CD8-positive, alpha-beta memory T cell (primary cell): ENCODE measurements at regions of chr10 and their contacts with region 1.

Region 1: DNA sequence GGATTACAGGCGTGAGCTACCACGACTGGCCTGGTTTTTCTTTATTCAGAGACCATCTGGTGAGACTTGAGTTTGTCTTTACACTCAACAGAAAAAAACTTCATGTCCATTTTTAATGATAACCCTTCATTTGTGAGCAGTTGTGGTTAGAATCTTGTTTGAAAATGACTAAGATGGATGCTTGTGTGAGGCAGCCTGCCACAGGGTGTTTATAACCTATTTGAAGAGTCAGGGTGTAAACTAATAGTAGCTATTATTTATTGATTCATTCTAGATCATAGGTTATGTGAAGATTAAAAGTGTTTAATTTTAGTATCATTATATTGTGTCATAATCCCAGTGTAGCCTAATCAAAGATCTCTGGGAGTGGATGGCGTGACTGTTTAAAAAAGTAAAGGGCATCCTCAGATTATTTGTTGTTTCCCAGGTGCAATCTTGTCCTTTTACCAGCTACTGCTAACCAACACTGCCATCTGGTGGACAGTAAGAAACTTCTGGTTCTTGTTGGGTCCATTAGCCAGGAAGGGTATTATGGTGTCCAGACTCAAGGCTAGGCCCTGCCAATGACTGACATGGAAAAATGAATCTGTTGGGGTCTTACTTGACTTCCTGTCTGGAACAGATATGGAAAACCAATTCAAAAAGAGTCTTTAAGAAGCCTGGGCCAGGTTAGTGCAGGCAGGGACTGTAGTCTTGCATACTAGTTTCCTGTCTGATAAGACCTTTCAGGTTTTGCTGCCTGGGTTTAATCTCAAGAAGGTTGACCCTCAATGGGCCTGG is 24.9 kb downstream of the NRBF2 start:
- DNase-seq: peak; percentile 13 to 57 (median 57)
- H3K4me3 ChIP-seq: no peak overlapping the region
- H3K4me3 Mint-ChIP-seq: no peak overlapping the region
- H3K27ac ChIP-seq: no peak overlapping the region
- H3K27ac Mint-ChIP-seq: peak overlapping the region in 1 of 8 donors; percentile 65
- H3K4me1 ChIP-seq: no peaks in the 10 kb centered on the region
- H3K4me1 Mint-ChIP-seq: peaks cover 4 to 18% (median 12%) of the 10 kb centered on the region in 3 donors
- H3K27me3 ChIP-seq: no peaks in the 10 kb centered on the region
- H3K27me3 Mint-ChIP-seq: peaks cover 0 to 1% of the 10 kb centered on the region in 2 donors

Region 2: DNA sequence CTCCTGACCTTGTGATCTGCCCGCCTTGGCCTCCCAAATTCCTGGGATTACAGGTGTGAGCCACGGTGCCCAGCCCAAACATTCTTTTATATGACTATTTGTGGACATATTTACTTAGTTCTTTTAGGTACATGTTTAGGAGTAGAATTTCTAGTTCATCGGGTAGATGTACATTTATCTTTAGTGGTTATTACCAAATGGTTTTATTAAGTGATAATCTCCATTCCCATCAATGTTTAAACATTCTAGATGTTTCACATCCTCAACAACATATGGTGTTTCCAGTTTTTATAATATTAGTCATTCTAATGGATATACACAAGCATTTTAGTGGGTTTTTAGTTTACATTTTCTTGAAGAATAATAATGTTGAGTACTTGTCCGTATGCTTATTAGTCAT is 1021.1 kb before region 1 on chr10:
- CTCF ChIA-PET with region 1: no interaction called
- POLR2A ChIA-PET with region 1: no interaction called
- DNase-seq: no peak
- H3K4me3 ChIP-seq: no peak overlapping the region
- H3K4me3 Mint-ChIP-seq: no peak overlapping the region
- H3K27ac ChIP-seq: no peak overlapping the region
- H3K27ac Mint-ChIP-seq: no peak overlapping the region
- H3K4me1 ChIP-seq: no peaks in the 10 kb centered on the region
- H3K4me1 Mint-ChIP-seq: peaks cover 0 to 4% (median 2%) of the 10 kb centered on the region in 3 donors
- H3K27me3 ChIP-seq: no peaks in the 10 kb centered on the region
- H3K27me3 Mint-ChIP-seq: no peaks in the 10 kb centered on the region

Region 3: GRCh38 chr10:62437696-62438095 is 720.3 kb before region 1 on chr10:
- CTCF ChIA-PET with region 1: interaction called, 19 read pairs
- POLR2A ChIA-PET with region 1: no interaction called
- DNase-seq: peak in 2 of 5 donors; percentile 46 to 58
- H3K4me3 ChIP-seq: no peak overlapping the region
- H3K4me3 Mint-ChIP-seq: no peak overlapping the region
- H3K27ac ChIP-seq: no peak overlapping the region
- H3K27ac Mint-ChIP-seq: no peak overlapping the region
- H3K4me1 ChIP-seq: no peaks in the 10 kb centered on the region
- H3K4me1 Mint-ChIP-seq: peaks cover 0 to 3% (median 2%) of the 10 kb centered on the region in 3 donors
- H3K27me3 ChIP-seq: no peaks in the 10 kb centered on the region
- H3K27me3 Mint-ChIP-seq: peaks cover 1 to 9% of the 10 kb centered on the region in 2 donors

Region 4: DNA sequence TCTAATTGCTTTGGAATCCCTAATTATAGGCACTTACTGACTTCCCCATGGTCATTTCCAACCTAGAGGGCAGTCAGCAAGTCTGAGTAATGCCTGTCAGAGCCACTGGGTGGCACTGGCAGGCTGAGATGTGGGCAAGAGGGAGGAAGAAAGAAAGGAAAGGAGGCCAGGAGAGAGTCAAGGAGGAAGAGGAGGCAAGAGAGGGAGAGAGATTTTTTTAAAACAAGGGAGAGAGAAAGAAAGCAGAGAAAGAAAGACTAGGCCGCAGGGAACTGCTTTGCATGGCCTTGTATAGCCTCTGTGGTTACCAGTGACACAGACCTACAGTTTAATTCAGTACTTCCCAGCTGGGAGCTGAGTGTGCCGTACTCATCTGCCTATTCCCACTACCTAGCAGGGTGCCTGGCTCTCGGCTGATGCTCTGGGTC is 563.9 kb before region 1 on chr10:
- CTCF ChIA-PET with region 1: interaction called, 16 read pairs
- POLR2A ChIA-PET with region 1: no interaction called
- DNase-seq: peak; percentile 28 to 62 (median 34)
- H3K4me3 ChIP-seq: no peak overlapping the region
- H3K4me3 Mint-ChIP-seq: no peak overlapping the region
- H3K27ac ChIP-seq: no peak overlapping the region
- H3K27ac Mint-ChIP-seq: no peak overlapping the region
- H3K4me1 ChIP-seq: no peaks in the 10 kb centered on the region
- H3K4me1 Mint-ChIP-seq: peaks cover 0 to 5% (median 0%) of the 10 kb centered on the region in 3 donors
- H3K27me3 ChIP-seq: no peaks in the 10 kb centered on the region
- H3K27me3 Mint-ChIP-seq: peaks cover 7 to 10% of the 10 kb centered on the region in 2 donors

Region 5: GRCh38 chr10:63145782-63146181 is 12.3 kb before region 1 on chr10:
- CTCF ChIA-PET with region 1: interaction called, 10 read pairs
- POLR2A ChIA-PET with region 1: no interaction called
- DNase-seq: no peak
- H3K4me3 ChIP-seq: no peak overlapping the region
- H3K4me3 Mint-ChIP-seq: no peak overlapping the region
- H3K27ac ChIP-seq: no peak overlapping the region
- H3K27ac Mint-ChIP-seq: peak overlapping the region in 3 of 8 donors; percentile 6 to 52 (median 50)
- H3K4me1 ChIP-seq: peaks cover 19% of the 10 kb centered on the region
- H3K4me1 Mint-ChIP-seq: peaks cover 42 to 78% (median 73%) of the 10 kb centered on the region in 3 donors
- H3K27me3 ChIP-seq: no peaks in the 10 kb centered on the region
- H3K27me3 Mint-ChIP-seq: peaks cover 0 to 2% of the 10 kb centered on the region in 2 donors

Region 6: DNA sequence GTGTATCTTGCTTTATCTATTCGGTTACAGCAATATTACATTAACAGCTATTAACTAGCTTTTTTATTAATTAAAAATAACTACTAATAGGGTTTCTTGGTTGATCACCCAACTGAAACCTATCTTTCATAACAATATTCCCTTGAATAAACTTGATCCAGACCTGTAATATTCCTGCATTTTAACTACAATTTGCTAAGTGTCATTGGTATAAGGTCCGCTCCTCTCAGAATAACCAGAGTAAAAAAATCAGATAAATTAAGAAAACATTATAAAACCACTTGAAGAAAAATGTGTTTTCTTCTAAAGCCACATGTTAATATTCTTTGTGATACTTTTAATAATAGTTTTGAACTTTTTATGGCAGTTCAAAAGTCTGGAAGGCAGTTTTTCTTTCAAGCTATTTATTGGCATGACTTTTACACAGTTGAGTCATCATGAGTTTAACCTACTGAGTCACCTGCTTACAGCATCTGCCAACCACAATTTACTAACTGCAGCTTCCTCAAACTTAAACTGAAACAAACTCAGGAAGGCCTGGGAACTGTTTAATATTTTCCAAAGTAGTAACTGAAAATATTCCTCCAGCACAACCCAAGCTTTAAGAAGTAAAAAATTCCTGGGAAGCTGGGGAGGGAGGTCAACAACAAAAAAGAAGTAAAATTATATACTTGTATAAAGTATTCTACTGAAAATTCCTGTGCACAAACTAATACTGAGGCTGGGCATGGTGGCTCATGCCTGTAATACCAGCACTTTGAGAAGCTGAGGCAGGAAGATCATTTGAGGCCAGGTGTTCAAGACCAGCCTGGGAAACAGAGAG is 78.3 kb after region 1 on chr10:
- CTCF ChIA-PET with region 1: no interaction called
- POLR2A ChIA-PET with region 1: no interaction called
- DNase-seq: no peak
- H3K4me3 ChIP-seq: no peak overlapping the region
- H3K4me3 Mint-ChIP-seq: peak overlapping the region in 3 of 7 donors; percentile 29 to 51 (median 36)
- H3K27ac ChIP-seq: peak overlapping the region; percentile 35
- H3K27ac Mint-ChIP-seq: peak overlapping the region in 7 of 8 donors; percentile 10 to 87 (median 29)
- H3K4me1 ChIP-seq: peaks cover 56% of the 10 kb centered on the region
- H3K4me1 Mint-ChIP-seq: peaks cover 55 to 74% (median 69%) of the 10 kb centered on the region in 3 donors
- H3K27me3 ChIP-seq: no peaks in the 10 kb centered on the region
- H3K27me3 Mint-ChIP-seq: no peaks in the 10 kb centered on the region

Region 7: GRCh38 chr10:63421591-63421990 is 263.6 kb after region 1 on chr10:
- CTCF ChIA-PET with region 1: no interaction called
- POLR2A ChIA-PET with region 1: no interaction called
- DNase-seq: peak in 2 of 5 donors; percentile 27 to 51
- H3K4me3 ChIP-seq: no peak overlapping the region
- H3K4me3 Mint-ChIP-seq: peak overlapping the region in 6 of 7 donors; percentile 4 to 65 (median 44)
- H3K27ac ChIP-seq: peak overlapping the region; percentile 27
- H3K27ac Mint-ChIP-seq: peak overlapping the region; percentile 64 to 94 (median 80)
- H3K4me1 ChIP-seq: peaks cover 19% of the 10 kb centered on the region
- H3K4me1 Mint-ChIP-seq: peaks cover 32 to 57% (median 34%) of the 10 kb centered on the region in 3 donors
- H3K27me3 ChIP-seq: no peaks in the 10 kb centered on the region
- H3K27me3 Mint-ChIP-seq: no peaks in the 10 kb centered on the region

Region 8: GRCh38 chr10:63657761-63658160 is 499.7 kb after region 1 on chr10:
- CTCF ChIA-PET with region 1: no interaction called
- POLR2A ChIA-PET with region 1: no interaction called
- DNase-seq: no peak
- H3K4me3 ChIP-seq: no peak overlapping the region
- H3K4me3 Mint-ChIP-seq: no peak overlapping the region
- H3K27ac ChIP-seq: no peak overlapping the region
- H3K27ac Mint-ChIP-seq: no peak overlapping the region
- H3K4me1 ChIP-seq: no peaks in the 10 kb centered on the region
- H3K4me1 Mint-ChIP-seq: no peaks in the 10 kb centered on the region
- H3K27me3 ChIP-seq: no peaks in the 10 kb centered on the region
- H3K27me3 Mint-ChIP-seq: peaks cover 0 to 3% of the 10 kb centered on the region in 2 donors

Region 9: GRCh38 chr10:63720072-63720537 is 562.1 kb after region 1 on chr10:
- CTCF ChIA-PET with region 1: interaction called, 22 read pairs
- POLR2A ChIA-PET with region 1: no interaction called
- DNase-seq: peak in 4 of 5 donors; percentile 21 to 61 (median 52)
- H3K4me3 ChIP-seq: no peak overlapping the region
- H3K4me3 Mint-ChIP-seq: peak overlapping the region in 4 of 7 donors; percentile 13 to 39 (median 27)
- H3K27ac ChIP-seq: no peak overlapping the region
- H3K27ac Mint-ChIP-seq: peak overlapping the region in 3 of 8 donors; percentile 17 to 82 (median 64)
- H3K4me1 ChIP-seq: peaks cover 4% of the 10 kb centered on the region
- H3K4me1 Mint-ChIP-seq: peaks cover 7 to 12% (median 11%) of the 10 kb centered on the region in 3 donors
- H3K27me3 ChIP-seq: no peaks in the 10 kb centered on the region
- H3K27me3 Mint-ChIP-seq: peaks cover 5 to 10% of the 10 kb centered on the region in 2 donors